ENCODE measurements at regions of chr12 and their contacts with region 1.

Region 1: DNA sequence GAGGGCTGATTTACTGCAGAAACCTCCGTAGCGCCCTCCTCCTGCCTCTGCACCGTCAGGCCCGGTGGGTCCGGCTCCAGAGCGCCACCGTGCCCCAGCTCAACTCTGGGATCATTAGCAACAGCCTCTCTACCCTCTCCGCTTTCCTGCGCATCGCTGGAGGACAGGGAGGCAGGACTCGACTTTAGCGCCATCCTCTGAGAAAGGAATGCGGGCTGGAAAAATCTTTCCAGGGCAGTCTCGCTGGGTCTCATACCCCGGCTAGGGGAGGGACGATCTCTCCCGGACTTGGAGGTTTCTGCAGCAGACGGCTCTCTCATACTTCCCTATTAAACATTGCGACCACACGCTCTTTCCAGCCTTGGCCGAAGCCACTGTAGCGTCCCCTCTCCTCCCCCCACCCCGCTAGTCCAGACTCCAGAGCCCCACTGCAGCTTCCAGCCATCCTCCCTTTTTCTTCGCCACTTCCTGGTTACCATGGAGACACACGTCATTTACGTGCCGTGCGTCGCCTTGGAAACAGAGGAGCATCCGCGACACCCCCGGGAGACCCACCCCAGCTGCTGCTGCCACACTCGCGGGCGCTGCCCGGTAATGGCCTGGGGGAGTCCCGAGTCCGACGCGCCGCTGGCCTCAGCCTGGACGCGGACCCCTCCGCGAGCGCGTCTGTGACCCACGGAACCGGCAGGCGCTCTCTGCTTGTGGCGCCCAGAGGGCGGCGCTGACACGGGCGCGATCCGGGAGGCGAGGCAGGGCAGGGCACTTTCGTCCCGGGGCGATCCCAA is at the start of gene CCDC184:
- DNase-seq: peak; percentile 95
- H3K4me3 Mint-ChIP-seq: peak within 1 kb of the TSS; percentile 95
- H3K27ac Mint-ChIP-seq: peak within 1 kb of the TSS; percentile 85
- H3K4me1 Mint-ChIP-seq: peaks cover 29% of the 10 kb centered on the region
- H3K27me3 Mint-ChIP-seq: peaks cover 68% of the 10 kb centered on the region
- total RNA-seq, gene CCDC184: 0.38 and 0.44 TPM in 2 replicates

Region 2: DNA sequence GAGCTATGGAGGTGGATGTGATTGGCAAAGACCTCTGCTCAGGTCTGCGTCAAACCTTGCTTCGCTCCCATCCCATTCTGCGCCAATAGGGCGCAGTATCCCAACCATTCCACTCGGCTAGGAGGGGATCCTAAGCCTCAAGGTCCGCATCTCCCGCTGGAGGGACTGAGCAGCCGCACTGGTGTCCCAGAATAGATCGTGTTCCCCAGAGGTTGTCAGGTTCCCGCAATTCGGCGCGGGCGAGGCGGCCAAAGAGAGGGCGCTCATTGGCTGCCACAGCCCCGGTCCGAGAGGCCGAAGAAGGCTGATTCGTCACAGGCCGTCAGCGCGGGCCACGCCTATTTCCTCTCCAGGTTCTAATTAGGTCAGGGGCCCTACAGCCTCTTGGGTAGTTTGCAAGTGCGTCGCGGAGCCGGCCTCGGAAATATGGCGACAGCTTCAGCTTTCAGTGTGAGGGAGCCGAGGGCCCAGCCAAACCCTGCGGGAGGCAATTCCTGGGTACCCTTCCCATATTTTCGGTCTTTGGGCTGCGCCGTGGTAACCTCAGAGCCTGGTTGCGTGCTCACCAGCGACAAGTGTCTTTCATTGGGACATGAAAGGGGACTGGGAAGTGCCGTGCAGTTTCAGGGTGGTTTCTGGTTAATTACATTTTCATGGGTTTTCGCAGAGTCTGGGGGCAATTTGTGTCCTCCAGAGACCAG is 14.8 kb after region 1 on chr12:
- intact Hi-C with region 1: loop called (anchors 1 kb)
- DNase-seq: peak; percentile 97
- H3K4me3 Mint-ChIP-seq: peak overlapping the region; percentile 88
- H3K27ac Mint-ChIP-seq: peak overlapping the region; percentile 97
- H3K4me1 Mint-ChIP-seq: peaks cover 29% of the 10 kb centered on the region
- H3K27me3 Mint-ChIP-seq: peaks cover 19% of the 10 kb centered on the region

Region 3: DNA sequence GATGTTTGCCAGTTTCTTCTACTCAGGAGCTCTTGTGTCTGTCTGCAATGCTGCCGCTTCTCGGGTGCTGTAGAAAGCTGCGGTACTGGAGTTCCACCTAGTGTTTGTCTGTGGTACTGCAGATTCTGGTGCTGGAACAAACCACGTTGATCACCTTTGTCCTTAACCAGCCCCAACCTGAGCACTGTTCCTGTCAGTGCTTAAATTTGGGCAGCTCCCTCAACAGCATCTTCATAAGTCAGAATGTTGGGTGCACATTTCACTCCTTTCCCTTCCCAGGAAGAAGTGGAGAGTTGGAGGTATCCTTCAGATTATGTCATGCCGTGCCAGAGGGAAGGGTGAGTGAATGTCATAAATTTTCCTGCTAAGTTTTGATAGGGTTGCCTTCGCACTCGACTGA is 435.3 kb after region 1 on chr12:
- intact Hi-C with region 1: loop called (anchors 10 kb)
- DNase-seq: peak; percentile 93
- H3K4me3 Mint-ChIP-seq: no peak overlapping the region
- H3K27ac Mint-ChIP-seq: no peak overlapping the region
- H3K4me1 Mint-ChIP-seq: peaks cover 3% of the 10 kb centered on the region
- H3K27me3 Mint-ChIP-seq: peaks cover 26% of the 10 kb centered on the region

Region 4: GRCh38 chr12:48814262-48815125 is 631.2 kb after region 1 on chr12:
- intact Hi-C with region 1: loop called (anchors 10 kb)
- DNase-seq: peak; percentile 96
- H3K4me3 Mint-ChIP-seq: peak overlapping the region; percentile 98
- H3K27ac Mint-ChIP-seq: peak overlapping the region; percentile 88
- H3K4me1 Mint-ChIP-seq: peaks cover 34% of the 10 kb centered on the region
- H3K27me3 Mint-ChIP-seq: peaks cover 26% of the 10 kb centered on the region

Measured in activated CD4-positive, alpha-beta T cell treated with anti-CD3 and anti-CD28 coated beads, Interleukin-2, amount 10 ng/mL, durations not matched to agents 24 days and 14 days (primary cell).